ENCODE measurements at regions of chr17 and their contacts with region 1.

Region 1: GRCh38 chr17:16353317-16354174 is at the start of gene CENPV:
- DNase-seq: peak; percentile 81

Region 2: GRCh38 chr17:16342979-16343378 is 10.6 kb before region 1 on chr17:
- CTCF ChIA-PET with region 1: no interaction called
- POLR2A ChIA-PET with region 1: interaction called, 33 read pairs
- DNase-seq: no peak